Endothelial cell of umbilical vein (primary cell): ENCODE measurements at regions of chr16 and their contacts with region 1.

Region 1: DNA sequence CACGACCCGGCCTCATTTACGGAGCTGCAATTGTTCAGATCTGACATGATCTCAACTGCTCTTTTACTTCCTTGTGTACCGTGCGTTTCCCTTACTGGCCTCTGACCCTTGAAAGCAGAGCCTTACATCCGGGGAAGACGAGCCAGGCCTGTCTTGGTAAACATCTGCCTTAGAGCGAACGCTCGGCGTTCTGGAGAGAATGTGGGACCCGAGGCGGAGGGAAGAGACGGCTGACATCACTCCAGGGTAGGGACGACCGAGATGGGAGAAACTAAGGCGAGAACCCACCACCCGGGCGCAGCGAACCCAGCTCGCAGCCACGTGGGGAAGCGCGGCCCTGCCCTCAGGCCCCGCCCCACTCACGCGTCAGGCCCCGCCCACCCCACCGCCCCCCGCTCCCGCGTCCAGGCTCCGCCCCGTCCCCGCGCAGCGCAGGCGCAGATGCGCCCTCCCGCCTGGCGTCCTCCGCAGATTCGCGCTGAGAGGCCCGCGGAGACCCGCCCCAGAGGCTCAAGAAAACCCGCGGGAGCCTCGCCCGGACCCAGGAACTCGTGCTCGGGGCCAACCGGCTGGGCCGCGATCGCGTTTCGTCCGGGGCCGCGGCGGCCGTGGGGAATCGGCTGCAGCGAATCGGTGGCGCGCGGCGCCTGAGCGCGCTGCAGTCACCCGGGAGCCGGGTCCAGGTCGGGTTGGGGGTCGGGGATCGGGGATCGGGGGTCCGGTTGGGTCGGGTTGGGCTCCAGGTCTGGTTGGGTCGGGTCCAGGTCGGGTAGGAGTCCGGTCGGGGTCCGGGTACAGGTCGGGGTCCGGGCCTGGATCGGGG is at the start of gene TELO2:
- DNase-seq: peak; percentile 63
- H3K4me3 ChIP-seq: peak within 1 kb of the TSS; percentile 67 to 85 (median 77)
- H3K27ac ChIP-seq: peak within 1 kb of the TSS; percentile 84
- H3K4me1 ChIP-seq: peaks cover 15% of the 10 kb centered on the region
- H3K27me3 ChIP-seq: no peaks in the 10 kb centered on the region
- CTCF ChIP-seq: no peak
- POLR2A ChIP-seq: peak; percentile 68
- total RNA-seq, gene TELO2: 60.5 and 61.6 TPM in 2 replicates

Region 2: DNA sequence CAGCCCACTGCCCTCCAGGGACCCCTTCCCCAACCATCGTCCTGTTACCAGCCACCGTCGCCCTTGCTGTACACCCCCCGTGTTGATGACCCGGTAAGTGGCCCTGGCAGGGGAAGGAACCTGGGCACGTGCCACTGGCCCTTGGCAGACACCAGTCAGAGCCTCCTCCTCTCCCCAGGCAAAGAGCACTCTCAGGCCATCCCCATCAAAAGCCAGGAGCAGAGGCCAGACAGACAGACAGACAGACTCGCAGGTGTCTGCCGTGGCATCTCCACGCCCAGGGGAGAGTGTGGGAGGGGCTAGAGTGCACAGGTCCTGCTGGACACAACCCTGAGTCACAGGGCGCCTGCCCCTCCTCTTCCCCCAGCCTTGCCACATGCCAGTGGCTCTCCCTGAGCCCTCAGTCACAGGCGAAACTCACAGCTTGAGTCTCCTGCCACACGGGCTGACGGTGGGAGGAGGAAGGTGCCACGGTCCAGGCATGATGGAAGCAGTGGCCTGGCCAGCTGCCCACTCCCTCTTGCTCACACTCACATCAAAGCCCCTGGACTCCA is 26.1 kb before region 1 on chr16:
- CTCF ChIA-PET with region 1: no interaction called
- POLR2A ChIA-PET with region 1: no interaction called
- dilution Hi-C with region 1: no loop called
- intact Hi-C with region 1: no loop called
- DNase-seq: no peak
- H3K4me3 ChIP-seq: no peak overlapping the region
- H3K27ac ChIP-seq: no peak overlapping the region
- H3K4me1 ChIP-seq: no peaks in the 10 kb centered on the region
- H3K27me3 ChIP-seq: no peaks in the 10 kb centered on the region
- CTCF ChIP-seq: no peak
- POLR2A ChIP-seq: no peak

Region 3: DNA sequence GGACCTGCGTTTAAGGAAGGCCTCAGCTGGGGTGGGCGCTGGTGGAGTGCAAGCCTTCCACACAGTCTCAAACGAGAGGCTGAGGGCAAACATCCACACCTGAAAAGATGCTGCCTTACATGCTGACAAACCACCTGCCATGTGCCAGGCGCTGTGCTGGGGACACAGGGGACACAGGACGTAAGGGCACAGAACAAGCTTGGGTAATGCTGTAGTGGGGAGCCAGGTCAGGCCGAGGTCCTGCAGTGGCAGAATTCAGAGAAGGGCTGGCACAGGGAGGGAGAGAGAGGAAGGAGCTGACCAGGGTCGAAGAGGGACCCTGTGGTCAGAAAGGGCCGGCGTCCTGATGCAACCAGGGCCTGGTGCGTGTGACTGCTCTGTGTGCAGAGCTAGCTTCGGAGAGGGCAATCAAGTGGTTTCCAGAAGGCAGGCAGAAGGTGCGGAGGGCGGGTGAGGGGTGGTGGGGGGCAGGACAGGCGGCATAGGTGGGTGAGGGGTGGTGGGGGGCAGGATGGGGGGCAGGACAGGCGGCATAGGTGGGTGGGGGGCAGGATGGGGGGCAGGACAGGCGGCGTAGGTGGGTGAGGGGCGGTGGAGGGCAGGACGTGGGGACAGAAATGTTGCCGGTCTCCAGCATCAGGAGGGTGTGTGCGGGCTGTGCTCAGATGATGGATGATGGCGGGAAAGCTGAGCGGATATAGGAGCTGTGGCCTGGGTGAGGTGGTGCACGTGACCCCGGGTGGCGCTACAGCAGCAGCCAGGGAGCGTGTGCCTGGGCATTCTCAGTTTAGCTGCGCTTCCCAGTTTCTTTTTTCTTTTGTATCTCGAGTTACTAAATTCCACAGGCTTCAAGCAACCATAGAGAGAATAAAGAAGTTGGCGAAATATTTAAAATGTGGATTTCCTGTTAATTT is 18.8 kb after region 1 on chr16:
- CTCF ChIA-PET with region 1: interaction called, 11 read pairs
- POLR2A ChIA-PET with region 1: interaction called, 6 read pairs
- dilution Hi-C with region 1: no loop called
- intact Hi-C with region 1: no loop called
- DNase-seq: no peak
- H3K4me3 ChIP-seq: peak overlapping the region in 1 of 3 experiments; percentile 9
- H3K27ac ChIP-seq: peak overlapping the region; percentile 21
- H3K4me1 ChIP-seq: peaks cover 12% of the 10 kb centered on the region
- H3K27me3 ChIP-seq: no peaks in the 10 kb centered on the region
- CTCF ChIP-seq: no peak
- POLR2A ChIP-seq: no peak

Region 4: GRCh38 chr16:1533443-1533951 is 40.4 kb after region 1 on chr16 and contains the start of gene TMEM204:
- CTCF ChIA-PET with region 1: interaction called, 16 read pairs
- POLR2A ChIA-PET with region 1: no interaction called
- dilution Hi-C with region 1: no loop called
- intact Hi-C with region 1: loop called (anchors 1 kb)
- DNase-seq: peak; percentile 83
- H3K4me3 ChIP-seq: peak within 1 kb of the TSS; percentile 39 to 72 (median 56)
- H3K27ac ChIP-seq: peak within 1 kb of the TSS; percentile 67
- H3K4me1 ChIP-seq: peaks cover 37% of the 10 kb centered on the region
- H3K27me3 ChIP-seq: no peaks in the 10 kb centered on the region
- CTCF ChIP-seq: no peak
- POLR2A ChIP-seq: peak; percentile 77
- total RNA-seq, gene TMEM204: 32.5 and 37.5 TPM in 2 replicates

Region 5: GRCh38 chr16:1543085-1543896 is 50.2 kb after region 1 on chr16:
- CTCF ChIA-PET with region 1: interaction called, 19 read pairs
- POLR2A ChIA-PET with region 1: no interaction called
- dilution Hi-C with region 1: no loop called
- intact Hi-C with region 1: loop called (anchors 1 kb)
- DNase-seq: peak; percentile 92
- H3K4me3 ChIP-seq: no peak overlapping the region
- H3K27ac ChIP-seq: peak overlapping the region; percentile 98
- H3K4me1 ChIP-seq: peaks cover 51% of the 10 kb centered on the region
- H3K27me3 ChIP-seq: no peaks in the 10 kb centered on the region
- CTCF ChIP-seq: peak; percentile 23 to 26
- POLR2A ChIP-seq: no peak

Region 6: DNA sequence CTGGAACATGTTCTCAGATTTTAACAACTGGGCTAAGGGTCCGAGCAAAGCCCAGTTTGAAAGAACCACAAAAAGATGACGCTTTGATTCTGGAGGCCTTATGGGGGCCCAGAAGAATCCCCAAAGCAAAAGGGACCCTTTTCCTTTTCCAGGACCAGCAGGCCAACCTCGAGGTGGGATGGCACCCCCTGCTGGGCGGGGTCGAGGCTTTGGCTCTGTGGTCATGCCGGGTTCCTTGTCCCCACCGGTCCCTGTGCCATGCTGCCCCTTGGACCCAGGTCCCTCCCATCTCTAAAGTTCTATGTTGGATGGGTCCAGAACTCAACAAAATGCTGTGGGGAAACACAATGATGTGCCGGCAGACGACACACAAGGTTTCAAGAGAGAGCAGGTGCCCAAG is 71.2 kb after region 1 on chr16:
- CTCF ChIA-PET with region 1: interaction called, 9 read pairs
- POLR2A ChIA-PET with region 1: no interaction called
- dilution Hi-C with region 1: no loop called
- intact Hi-C with region 1: loop called (anchors 1 kb)
- DNase-seq: no peak
- H3K4me3 ChIP-seq: no peak overlapping the region
- H3K27ac ChIP-seq: no peak overlapping the region
- H3K4me1 ChIP-seq: no peaks in the 10 kb centered on the region
- H3K27me3 ChIP-seq: no peaks in the 10 kb centered on the region
- CTCF ChIP-seq: peak; percentile 28 to 48
- POLR2A ChIP-seq: no peak

Region 7: GRCh38 chr16:1610276-1611017 is 117.3 kb after region 1 on chr16:
- CTCF ChIA-PET with region 1: interaction called, 24 read pairs
- POLR2A ChIA-PET with region 1: no interaction called
- dilution Hi-C with region 1: no loop called
- intact Hi-C with region 1: loop called (anchors 1 kb)
- DNase-seq: peak; percentile 91
- H3K4me3 ChIP-seq: peak overlapping the region; percentile 48 to 80 (median 61)
- H3K27ac ChIP-seq: peak overlapping the region; percentile 32
- H3K4me1 ChIP-seq: peaks cover 29% of the 10 kb centered on the region
- H3K27me3 ChIP-seq: no peaks in the 10 kb centered on the region
- CTCF ChIP-seq: no peak
- POLR2A ChIP-seq: no peak

Region 8: GRCh38 chr16:1677802-1678496 is 184.8 kb after region 1 on chr16 and contains the start of gene JPT2:
- CTCF ChIA-PET with region 1: interaction called, 11 read pairs
- POLR2A ChIA-PET with region 1: no interaction called
- dilution Hi-C with region 1: no loop called
- intact Hi-C with region 1: no loop called
- DNase-seq: peak; percentile 99
- H3K4me3 ChIP-seq: peak within 1 kb of the TSS; percentile 60 to 96 (median 78)
- H3K27ac ChIP-seq: peak within 1 kb of the TSS; percentile 1
- H3K4me1 ChIP-seq: peaks cover 12% of the 10 kb centered on the region
- H3K27me3 ChIP-seq: no peaks in the 10 kb centered on the region
- CTCF ChIP-seq: no peak
- POLR2A ChIP-seq: peak; percentile 48
- total RNA-seq, gene JPT2: 86.5 and 93.3 TPM in 2 replicates